ENCODE measurements at regions of chr17 and their contacts with region 1.

Region 1: GRCh38 chr17:68346448-68346847 is 55.2 kb downstream of the ARSG start:
- DNase-seq: peak; percentile 95
- H3K4me3 ChIP-seq: peak overlapping the region in 3 of 8 donors; percentile 0 to 54 (median 2)
- H3K27ac ChIP-seq: peak overlapping the region; percentile 49 to 96 (median 89)
- H3K4me1 ChIP-seq: peaks cover 22 to 78% (median 65%) of the 10 kb centered on the region in 6 donors
- H3K27me3 ChIP-seq: no peaks in the 10 kb centered on the region
- CTCF ChIP-seq: peak in 2 of 11 experiments; percentile 25 to 28
- POLR2A ChIP-seq: no peak

Region 2: DNA sequence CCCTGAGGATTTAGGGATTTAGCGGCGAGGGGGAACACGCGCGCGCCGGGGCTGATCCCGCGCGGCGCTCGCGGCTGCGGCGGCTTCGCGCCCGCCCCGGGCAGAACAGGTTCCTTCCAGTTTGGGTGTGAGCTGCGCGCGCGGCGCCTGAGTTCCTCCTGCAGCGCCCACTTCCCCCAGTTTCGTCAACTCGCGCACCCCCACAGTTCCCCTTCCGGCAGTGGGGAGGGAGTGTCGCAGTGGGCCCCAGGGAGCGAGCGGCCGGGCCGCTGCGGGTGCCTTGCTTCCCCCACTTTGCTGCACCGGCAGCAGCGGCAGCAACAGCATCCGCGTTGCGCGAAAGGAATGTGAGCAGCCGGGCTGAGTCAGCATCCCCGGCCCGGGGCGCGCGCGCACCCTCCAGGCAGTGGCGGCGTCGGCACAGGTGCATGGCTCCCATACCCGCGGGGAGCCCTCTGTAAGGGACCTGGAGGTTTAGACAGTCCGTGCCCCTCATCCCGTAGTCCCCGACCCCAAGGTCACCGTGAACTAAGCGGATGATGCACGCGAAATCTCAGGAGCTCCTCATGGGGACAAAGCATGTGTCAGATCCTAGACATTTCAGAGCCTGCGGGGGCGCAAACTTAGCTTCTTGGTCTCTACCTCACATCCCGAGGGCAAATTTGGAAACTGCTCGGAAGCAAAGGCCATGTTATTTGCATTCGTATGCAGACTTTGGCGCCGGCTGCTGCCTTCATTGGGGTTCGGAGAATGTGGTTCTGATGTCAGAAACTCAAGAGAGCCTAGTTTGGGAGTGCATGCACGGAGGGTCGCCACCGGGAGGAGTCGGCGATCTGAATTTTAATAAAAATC is 54.4 kb before region 1 on chr17:
- intact Hi-C with region 1: loop called (anchors 10 kb)
- DNase-seq: peak; percentile 100
- H3K4me3 ChIP-seq: peak overlapping the region; percentile 60 to 94 (median 73)
- H3K27ac ChIP-seq: peak overlapping the region; percentile 96 to 100 (median 98)
- H3K4me1 ChIP-seq: peaks cover 12 to 91% (median 56%) of the 10 kb centered on the region in 6 donors
- H3K27me3 ChIP-seq: peaks cover 0 to 28% (median 0%) of the 10 kb centered on the region in 7 donors
- CTCF ChIP-seq: peak in 6 of 11 experiments; percentile 1 to 59 (median 48)
- POLR2A ChIP-seq: peak; percentile 55 to 89 (median 61)

Measured in spleen (tissue), 13 donors.